ENCODE measurements at regions of chr5 and their contacts with region 1.

Region 1: DNA sequence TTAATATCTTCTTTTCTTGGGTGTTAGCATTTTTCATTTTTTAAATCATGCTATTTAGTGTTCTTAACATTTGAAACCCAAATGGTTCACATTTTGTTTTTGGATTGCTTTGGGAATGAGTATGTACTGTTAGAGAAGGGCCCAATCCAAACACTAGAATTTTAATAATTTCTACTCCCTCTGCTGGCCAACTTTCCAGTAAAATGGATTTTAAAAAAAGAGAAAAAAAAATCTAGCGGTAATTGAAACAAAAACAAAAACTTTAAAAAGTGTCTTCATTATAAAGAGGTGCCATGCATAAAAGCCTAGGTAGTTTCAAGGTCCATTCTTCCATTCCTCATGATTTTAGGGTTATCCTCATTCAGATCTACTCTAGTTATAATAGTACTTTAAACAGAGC is 32.1 kb upstream of the RICTOR start:
- DNase-seq: peak in 1 of 5 donors; percentile 19
- H3K4me3 ChIP-seq: no peak overlapping the region
- H3K4me3 Mint-ChIP-seq: no peak overlapping the region
- H3K27ac ChIP-seq: no peak overlapping the region
- H3K27ac Mint-ChIP-seq: peak overlapping the region in 4 of 7 donors; percentile 31 to 70 (median 52)
- H3K4me1 ChIP-seq: peaks cover 7% of the 10 kb centered on the region
- H3K4me1 Mint-ChIP-seq: peaks cover 19 to 45% (median 21%) of the 10 kb centered on the region in 4 donors
- H3K27me3 ChIP-seq: no peaks in the 10 kb centered on the region
- H3K27me3 Mint-ChIP-seq: no peaks in the 10 kb centered on the region

Region 2: GRCh38 chr5:38994324-38994927 is 111.9 kb before region 1 on chr5:
- CTCF ChIA-PET with region 1: no interaction called
- POLR2A ChIA-PET with region 1: no interaction called
- intact Hi-C with region 1: loop called (anchors 2 kb)
- DNase-seq: peak; percentile 27 to 45 (median 39)
- H3K4me3 ChIP-seq: no peak overlapping the region
- H3K4me3 Mint-ChIP-seq: no peak overlapping the region
- H3K27ac ChIP-seq: no peak overlapping the region
- H3K27ac Mint-ChIP-seq: peak overlapping the region in 1 of 7 donors; percentile 40
- H3K4me1 ChIP-seq: peaks cover 3% of the 10 kb centered on the region
- H3K4me1 Mint-ChIP-seq: peaks cover 5 to 33% (median 20%) of the 10 kb centered on the region in 4 donors
- H3K27me3 ChIP-seq: no peaks in the 10 kb centered on the region
- H3K27me3 Mint-ChIP-seq: no peaks in the 10 kb centered on the region

Region 3: DNA sequence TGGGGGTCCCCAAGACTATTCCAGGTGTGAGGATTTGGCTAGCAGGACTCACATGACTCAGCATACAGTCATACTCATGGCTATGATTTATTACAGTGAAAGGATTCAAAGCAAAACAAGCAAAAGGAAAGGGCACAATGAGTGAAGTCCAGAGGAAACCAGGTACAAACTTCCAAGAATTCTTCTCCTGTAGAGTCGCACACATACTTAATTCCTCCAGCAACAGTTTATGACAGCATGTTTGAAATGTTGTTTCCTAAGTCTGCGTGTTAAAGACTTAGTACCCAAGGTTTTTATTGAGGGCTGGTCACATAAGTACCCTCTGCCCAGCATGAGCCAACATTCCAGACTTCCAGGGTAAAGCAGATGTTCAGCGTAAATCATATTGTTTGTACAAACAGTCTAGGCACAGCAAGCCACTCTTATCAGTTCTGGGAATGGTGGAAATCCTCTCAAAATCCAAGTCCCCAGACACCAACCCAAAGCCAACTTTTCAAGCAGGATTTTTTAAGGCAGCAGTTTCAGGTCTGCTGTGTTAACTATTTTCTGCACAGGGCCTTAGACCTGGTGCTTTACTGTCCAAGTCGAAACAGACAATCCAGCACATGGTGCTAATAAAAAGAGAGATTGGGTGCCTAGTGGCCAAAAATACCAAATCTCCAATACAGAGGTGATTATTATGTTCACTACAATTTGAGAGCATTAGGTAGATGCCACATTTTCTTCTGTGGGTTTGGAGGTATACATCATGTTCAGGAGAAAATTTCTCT is 13.6 kb before region 1 on chr5:
- CTCF ChIA-PET with region 1: no interaction called
- POLR2A ChIA-PET with region 1: no interaction called
- intact Hi-C with region 1: no loop called
- DNase-seq: no peak
- H3K4me3 ChIP-seq: no peak overlapping the region
- H3K4me3 Mint-ChIP-seq: no peak overlapping the region
- H3K27ac ChIP-seq: no peak overlapping the region
- H3K27ac Mint-ChIP-seq: no peak overlapping the region
- H3K4me1 ChIP-seq: no peaks in the 10 kb centered on the region
- H3K4me1 Mint-ChIP-seq: peaks cover 0 to 4% (median 1%) of the 10 kb centered on the region in 4 donors
- H3K27me3 ChIP-seq: no peaks in the 10 kb centered on the region
- H3K27me3 Mint-ChIP-seq: peaks cover 8 to 16% of the 10 kb centered on the region in 2 donors